K562 (cell line): ENCODE measurements at regions of chr19 and their contacts with region 1.

Region 1: GRCh38 chr19:2016041-2016807 is 710 bp upstream of the BTBD2 start:
- DNase-seq: peak; percentile 76 to 86 (median 84)
- ATAC-seq: peak; percentile 71
- H3K4me3 ChIP-seq: no peak overlapping the region
- H3K27ac ChIP-seq: no peak overlapping the region
- H3K4me1 ChIP-seq: peaks cover 0 to 41% of the 10 kb centered on the region in 2 experiments; a peak in 2 of 5 replicates
- H3K27me3 ChIP-seq: no peaks in the 10 kb centered on the region
- CTCF ChIP-seq: no peak
- EP300 ChIP-seq: no peak
- POLR2A ChIP-seq: no peak
- RAD21 ChIP-seq: no peak

Region 2: DNA sequence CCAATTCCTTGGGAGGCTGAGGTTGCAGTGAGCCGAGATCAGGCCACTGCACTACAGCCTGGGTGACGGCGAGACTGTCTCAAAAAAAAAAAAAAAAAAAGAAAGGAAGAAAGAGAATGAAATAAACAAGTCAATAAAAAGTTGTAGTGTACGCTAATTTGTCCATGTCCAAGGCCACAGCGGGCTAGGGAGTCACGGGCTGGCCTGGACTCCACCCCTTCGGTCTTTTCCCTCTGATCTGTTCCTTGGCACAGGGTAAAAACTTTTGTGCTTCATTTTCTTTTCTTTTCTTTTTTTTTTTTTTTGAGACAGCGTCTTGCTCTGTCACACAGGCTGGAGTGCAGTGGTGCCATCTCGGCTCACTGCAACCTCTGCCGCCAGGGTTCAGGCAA is 54.2 kb after region 1 on chr19:
- CTCF ChIA-PET with region 1: interaction called, 21 read pairs
- POLR2A ChIA-PET with region 1: no interaction called
- in situ Hi-C with region 1: loop called (anchors 5 kb)
- intact Hi-C with region 1: loop called (anchors 1 kb)
- DNase-seq: no peak
- ATAC-seq: no peak
- H3K4me3 ChIP-seq: no peak overlapping the region
- H3K27ac ChIP-seq: no peak overlapping the region
- H3K4me1 ChIP-seq: peaks cover 3 to 19% of the 10 kb centered on the region in 2 experiments; a peak in 4 of 5 replicates
- H3K27me3 ChIP-seq: no peaks in the 10 kb centered on the region
- CTCF ChIP-seq: no peak
- EP300 ChIP-seq: no peak
- POLR2A ChIP-seq: no peak
- RAD21 ChIP-seq: no peak

Region 3: DNA sequence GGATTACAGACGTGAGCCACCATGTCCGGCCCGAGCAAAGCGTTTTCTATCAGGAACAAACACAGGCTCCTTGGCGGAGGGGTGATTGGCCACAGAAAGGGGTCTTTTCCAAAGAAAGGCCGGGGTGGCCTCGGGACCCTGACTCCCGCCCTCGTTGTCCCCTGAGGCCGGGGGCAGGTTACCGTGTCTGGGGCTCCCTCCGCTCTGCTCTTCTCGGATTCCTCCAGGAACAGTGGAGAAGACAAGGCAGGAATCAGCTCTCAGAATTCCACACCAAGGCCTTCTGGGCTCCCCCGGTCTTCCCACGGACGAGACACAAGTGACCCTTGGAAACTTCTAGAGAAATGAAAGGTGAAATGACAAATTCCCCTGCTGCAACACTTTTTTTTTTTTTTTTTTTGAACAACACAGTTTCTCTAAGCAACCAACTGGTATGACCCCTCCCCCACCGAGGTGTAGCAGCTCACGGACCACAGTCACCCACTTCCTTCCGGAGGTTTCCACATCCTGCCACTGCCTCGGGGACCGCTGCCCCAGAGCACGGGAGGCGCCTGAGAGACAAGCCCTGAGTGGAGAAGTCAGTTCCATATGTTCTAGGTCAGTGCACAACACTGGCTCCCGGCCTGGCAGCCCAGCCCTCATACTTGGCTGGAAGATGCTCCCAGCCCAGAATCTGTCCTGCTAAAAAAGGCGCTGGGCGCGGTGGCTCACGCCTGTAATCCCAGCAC is 68.9 kb after region 1 on chr19:
- CTCF ChIA-PET with region 1: no interaction called
- POLR2A ChIA-PET with region 1: no interaction called
- in situ Hi-C with region 1: no loop called
- intact Hi-C with region 1: loop called (anchors 5 kb)
- DNase-seq: peak in 2 of 4 experiments; percentile 70
- ATAC-seq: peak; percentile 70
- H3K4me3 ChIP-seq: no peak overlapping the region
- H3K27ac ChIP-seq: peak overlapping the region; percentile 59; the same call in 2 of the 3 replicates
- H3K4me1 ChIP-seq: peaks cover 27 to 51% of the 10 kb centered on the region in 2 experiments; a peak in 4 of 5 replicates
- H3K27me3 ChIP-seq: no peaks in the 10 kb centered on the region
- CTCF ChIP-seq: no peak
- EP300 ChIP-seq: no peak; the same call in 1 of the 2 replicates
- POLR2A ChIP-seq: no peak
- RAD21 ChIP-seq: no peak